ENCODE measurements at regions of chr17 and their contacts with region 1.

Region 1: DNA sequence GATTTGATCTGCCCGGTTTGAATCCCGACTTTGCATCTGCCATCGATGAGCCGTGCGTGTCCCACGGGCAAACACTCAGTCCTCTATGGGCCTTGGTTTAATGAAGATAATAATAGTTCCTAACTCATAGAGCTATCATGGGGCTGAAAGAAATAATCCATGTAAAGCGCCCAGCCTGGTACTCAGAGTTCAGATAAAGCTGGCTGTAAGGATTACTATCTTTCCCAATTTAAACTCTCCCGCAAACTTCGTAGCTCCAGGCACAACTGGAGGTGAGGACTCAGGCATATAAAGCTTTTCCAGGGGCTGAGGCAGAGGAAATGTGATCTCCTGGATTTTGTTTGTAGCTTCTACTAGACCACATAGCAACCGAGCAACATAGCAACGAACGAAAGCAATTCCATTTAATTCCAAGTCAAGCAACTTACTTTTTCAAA is 16.3 kb downstream of the ALOX15 start:
- H3K4me3 ChIP-seq: no peak overlapping the region
- H3K27ac ChIP-seq: no peak overlapping the region
- H3K4me1 ChIP-seq: no peaks in the 10 kb centered on the region; the same call in 1 of the 2 replicates
- CTCF ChIP-seq: no peak

Region 2: GRCh38 chr17:4420692-4421131 is 204.5 kb before region 1 on chr17:
- CTCF ChIA-PET with region 1: interaction called, 19 read pairs
- POLR2A ChIA-PET with region 1: no interaction called
- H3K4me3 ChIP-seq: no peak overlapping the region
- H3K27ac ChIP-seq: no peak overlapping the region
- H3K4me1 ChIP-seq: no peaks in the 10 kb centered on the region
- CTCF ChIP-seq: peak; percentile 67

Region 3: GRCh38 chr17:4509401-4509800 is 115.8 kb before region 1 on chr17:
- CTCF ChIA-PET with region 1: no interaction called
- POLR2A ChIA-PET with region 1: no interaction called
- H3K4me3 ChIP-seq: no peak overlapping the region
- H3K27ac ChIP-seq: no peak overlapping the region
- H3K4me1 ChIP-seq: peaks cover 2% of the 10 kb centered on the region; the same call in 1 of the 2 replicates
- CTCF ChIP-seq: no peak

Region 4: DNA sequence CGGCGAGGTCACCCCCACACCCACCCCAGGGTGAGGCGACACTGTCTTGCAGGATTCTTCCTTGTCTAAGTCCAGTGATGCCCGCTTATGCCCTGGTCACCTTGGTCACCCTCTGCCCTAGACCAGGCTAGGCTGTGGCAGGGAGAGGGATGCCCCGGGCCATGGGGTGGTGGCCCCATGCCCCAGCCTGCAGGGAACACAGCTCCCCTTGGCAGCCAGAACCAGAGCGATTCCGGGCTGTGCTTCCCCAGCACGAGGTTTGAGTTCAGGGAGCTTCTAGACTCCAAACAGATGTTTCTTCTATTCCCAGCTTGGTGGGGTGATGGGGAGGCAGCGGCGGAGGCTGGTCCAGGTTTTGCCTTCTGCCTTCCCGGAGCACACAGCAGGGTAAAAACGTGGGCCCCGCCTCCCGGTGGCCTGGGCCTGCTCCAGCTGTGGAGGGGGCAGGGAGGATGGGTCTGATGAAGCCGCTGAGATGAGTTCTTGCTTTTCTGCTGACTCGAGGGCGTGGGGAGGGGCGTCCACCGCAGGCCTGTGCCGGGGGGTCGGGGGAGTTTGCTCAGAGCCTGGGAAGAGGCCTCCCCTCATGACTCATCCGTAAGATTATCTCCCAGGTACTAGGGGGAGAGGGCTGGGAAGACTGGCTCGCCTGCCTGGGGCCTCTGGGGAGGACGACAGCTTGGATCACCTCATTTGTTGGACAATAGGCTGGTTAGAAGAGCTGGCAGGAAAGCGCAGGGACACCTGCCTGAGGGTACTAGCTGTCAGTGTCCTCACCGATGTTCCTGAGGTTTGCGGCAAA is 25.5 kb before region 1 on chr17:
- CTCF ChIA-PET with region 1: interaction called, 22 read pairs
- POLR2A ChIA-PET with region 1: no interaction called
- H3K4me3 ChIP-seq: no peak overlapping the region
- H3K27ac ChIP-seq: peak overlapping the region; percentile 57
- H3K4me1 ChIP-seq: peaks cover 25% of the 10 kb centered on the region
- CTCF ChIP-seq: no peak

Region 5: DNA sequence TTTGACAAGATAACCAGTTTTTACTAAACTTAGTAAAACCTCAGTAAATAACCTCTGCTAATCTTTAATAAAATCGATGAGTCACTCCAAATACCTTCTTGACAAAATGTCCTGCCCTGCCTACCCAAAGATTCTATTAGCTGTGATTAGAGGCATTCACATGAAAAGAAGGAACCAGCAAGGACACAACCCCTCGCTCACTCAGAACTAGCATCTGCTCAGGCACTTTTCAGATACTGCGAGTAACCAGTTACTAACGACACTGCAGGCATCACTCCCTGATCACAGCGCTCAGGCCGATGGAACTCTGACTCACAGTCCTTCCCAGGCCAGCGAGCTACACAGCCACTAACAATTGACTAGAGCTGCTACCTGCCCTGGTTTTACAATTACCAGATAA is 54.5 kb after region 1 on chr17:
- CTCF ChIA-PET with region 1: no interaction called
- POLR2A ChIA-PET with region 1: no interaction called
- H3K4me3 ChIP-seq: no peak overlapping the region
- H3K27ac ChIP-seq: peak overlapping the region; percentile 31; the same call in 1 of the 2 replicates
- H3K4me1 ChIP-seq: peaks cover 14% of the 10 kb centered on the region
- CTCF ChIP-seq: no peak

Region 6: DNA sequence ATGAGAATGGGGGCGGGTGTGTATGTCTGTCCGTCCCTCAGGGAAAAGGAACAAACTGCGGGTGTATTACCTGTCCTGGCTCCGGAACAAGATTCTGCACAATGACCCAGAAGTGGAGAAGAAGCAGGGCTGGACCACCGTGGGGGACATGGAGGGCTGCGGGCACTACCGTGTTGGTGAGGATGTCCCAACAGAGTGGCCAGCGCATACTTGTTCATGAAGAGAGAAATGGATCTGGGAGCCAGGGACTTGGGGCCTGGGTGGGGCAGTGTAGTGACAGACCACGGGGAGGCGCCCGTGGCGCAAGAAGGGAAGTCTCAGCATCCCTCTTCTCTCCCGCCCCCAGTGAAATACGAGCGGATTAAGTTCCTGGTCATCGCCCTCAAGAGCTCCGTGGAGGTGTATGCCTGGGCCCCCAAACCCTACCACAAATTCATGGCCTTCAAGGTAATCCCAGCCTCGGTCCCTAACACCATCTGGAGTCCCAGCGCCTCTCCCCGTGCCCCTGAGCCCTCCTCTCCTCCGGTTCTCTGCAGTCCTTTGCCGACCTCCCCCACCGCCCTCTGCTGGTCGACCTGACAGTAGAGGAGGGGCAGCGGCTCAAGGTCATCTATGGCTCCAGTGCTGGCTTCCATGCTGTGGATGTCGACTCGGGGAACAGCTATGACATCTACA is 270.6 kb after region 1 on chr17:
- CTCF ChIA-PET with region 1: no interaction called
- POLR2A ChIA-PET with region 1: no interaction called
- H3K4me3 ChIP-seq: no peak overlapping the region
- H3K27ac ChIP-seq: no peak overlapping the region
- H3K4me1 ChIP-seq: no peaks in the 10 kb centered on the region
- CTCF ChIP-seq: 0 out of 2 replicates have a peak, but pooled peaks have one; percentile 14

Measured in HEK293 (cell line).